CD4-positive, alpha-beta T cell (primary cell): ENCODE measurements at regions of chr10 and their contacts with region 1.

Region 1: GRCh38 chr10:96831867-96832720 is at the start of gene LCOR:
- DNase-seq: peak; percentile 62 to 94 (median 78)
- ATAC-seq: peak; percentile 65
- H3K4me3 ChIP-seq: peak within 1 kb of the TSS; percentile 71
- H3K4me3 Mint-ChIP-seq: peak within 1 kb of the TSS; percentile 94
- H3K27ac ChIP-seq: peak within 1 kb of the TSS; percentile 78 to 80
- H3K27ac Mint-ChIP-seq: peak within 1 kb of the TSS; percentile 94
- H3K4me1 ChIP-seq: peaks cover 12% of the 10 kb centered on the region
- H3K4me1 Mint-ChIP-seq: peaks cover 54% of the 10 kb centered on the region
- H3K27me3 ChIP-seq: no peaks in the 10 kb centered on the region
- H3K27me3 Mint-ChIP-seq: no peaks in the 10 kb centered on the region
- CTCF ChIP-seq: no peak
- total RNA-seq, gene LCOR: 46.0 to 56.0 TPM

Region 2: DNA sequence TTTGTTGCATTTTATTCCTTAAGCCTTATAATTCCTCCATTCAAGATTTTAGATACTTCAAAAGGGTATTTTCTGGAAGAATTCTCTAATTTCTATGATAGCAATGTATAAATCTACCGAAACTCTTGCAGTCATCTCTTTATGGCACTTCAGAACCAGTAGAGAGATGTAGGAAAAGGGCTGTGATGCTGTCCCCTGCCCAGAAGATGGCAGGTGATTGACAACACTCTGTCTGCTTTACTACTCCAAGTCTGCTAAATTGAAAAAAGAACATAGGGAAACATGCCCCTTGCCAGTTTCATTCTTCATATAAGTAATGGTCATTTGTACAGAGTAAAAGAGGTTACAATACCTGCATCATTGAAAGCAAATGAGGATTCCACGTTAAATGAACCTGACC is 1143.4 kb before region 1 on chr10:
- CTCF ChIA-PET with region 1: no interaction called
- POLR2A ChIA-PET with region 1: no interaction called
- intact Hi-C with region 1: loop called in 1 of 2 experiments (anchors 5 kb)
- DNase-seq: no peak
- ATAC-seq: no peak
- H3K4me3 ChIP-seq: no peak overlapping the region
- H3K4me3 Mint-ChIP-seq: no peak overlapping the region
- H3K27ac ChIP-seq: no peak overlapping the region
- H3K27ac Mint-ChIP-seq: no peak overlapping the region
- H3K4me1 ChIP-seq: peaks cover 15% of the 10 kb centered on the region
- H3K4me1 Mint-ChIP-seq: peaks cover 39% of the 10 kb centered on the region
- H3K27me3 ChIP-seq: no peaks in the 10 kb centered on the region
- H3K27me3 Mint-ChIP-seq: no peaks in the 10 kb centered on the region
- CTCF ChIP-seq: no peak

Region 3: GRCh38 chr10:96395931-96396877 is 435.9 kb before region 1 on chr10:
- CTCF ChIA-PET with region 1: no interaction called
- POLR2A ChIA-PET with region 1: no interaction called
- intact Hi-C with region 1: loop called (anchors 1 kb)
- DNase-seq: peak; percentile 39 to 79 (median 46)
- ATAC-seq: peak; percentile 89
- H3K4me3 ChIP-seq: no peak overlapping the region
- H3K4me3 Mint-ChIP-seq: peak overlapping the region; percentile 60
- H3K27ac ChIP-seq: no peak overlapping the region
- H3K27ac Mint-ChIP-seq: no peak overlapping the region
- H3K4me1 ChIP-seq: peaks cover 6% of the 10 kb centered on the region
- H3K4me1 Mint-ChIP-seq: peaks cover 6% of the 10 kb centered on the region
- H3K27me3 ChIP-seq: peaks cover 13 to 14% of the 10 kb centered on the region in 2 experiments
- H3K27me3 Mint-ChIP-seq: peaks cover 31% of the 10 kb centered on the region
- CTCF ChIP-seq: peak; percentile 96

Region 4: DNA sequence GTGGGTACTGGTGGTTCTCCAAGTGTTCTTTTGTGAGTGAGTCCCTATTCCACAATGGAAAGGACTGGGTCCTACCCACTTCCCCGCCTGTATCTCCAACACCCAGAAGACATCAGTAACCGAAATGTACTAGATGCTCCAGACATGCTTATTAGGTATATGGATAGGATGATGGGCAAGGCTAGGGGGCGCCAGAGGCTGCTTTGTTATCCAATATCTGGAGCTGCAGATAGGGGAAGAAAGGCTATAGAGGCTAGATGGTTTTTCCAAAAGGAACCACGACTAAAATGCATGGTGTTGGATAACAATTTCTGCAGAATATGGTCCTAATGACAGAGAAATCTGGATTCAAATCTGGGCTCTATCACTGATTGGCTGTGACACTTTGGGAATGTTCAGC is 189.1 kb before region 1 on chr10:
- CTCF ChIA-PET with region 1: no interaction called
- POLR2A ChIA-PET with region 1: no interaction called
- intact Hi-C with region 1: loop called (anchors 1 to 2 kb)
- DNase-seq: peak in 9 of 14 experiments; percentile 15 to 63 (median 24)
- ATAC-seq: no peak
- H3K4me3 ChIP-seq: no peak overlapping the region
- H3K4me3 Mint-ChIP-seq: no peak overlapping the region
- H3K27ac ChIP-seq: no peak overlapping the region
- H3K27ac Mint-ChIP-seq: no peak overlapping the region
- H3K4me1 ChIP-seq: peaks cover 14% of the 10 kb centered on the region
- H3K4me1 Mint-ChIP-seq: no peaks in the 10 kb centered on the region
- H3K27me3 ChIP-seq: no peaks in the 10 kb centered on the region
- H3K27me3 Mint-ChIP-seq: no peaks in the 10 kb centered on the region
- CTCF ChIP-seq: no peak

Region 5: GRCh38 chr10:97334370-97335175 is 502.5 kb after region 1 on chr10 and contains the start of gene FRAT2:
- CTCF ChIA-PET with region 1: no interaction called
- POLR2A ChIA-PET with region 1: no interaction called
- intact Hi-C with region 1: loop called in 1 of 2 experiments (anchors 5 kb)
- DNase-seq: peak; percentile 78 to 95 (median 85)
- ATAC-seq: peak; percentile 88
- H3K4me3 ChIP-seq: peak within 1 kb of the TSS; percentile 76
- H3K4me3 Mint-ChIP-seq: peak within 1 kb of the TSS; percentile 96
- H3K27ac ChIP-seq: peak within 1 kb of the TSS; percentile 97
- H3K27ac Mint-ChIP-seq: peak within 1 kb of the TSS; percentile 91
- H3K4me1 ChIP-seq: peaks cover 43% of the 10 kb centered on the region
- H3K4me1 Mint-ChIP-seq: peaks cover 50% of the 10 kb centered on the region
- H3K27me3 ChIP-seq: no peaks in the 10 kb centered on the region
- H3K27me3 Mint-ChIP-seq: peaks cover 3% of the 10 kb centered on the region
- CTCF ChIP-seq: no peak
- total RNA-seq, gene FRAT2: 27.0 to 27.6 TPM